ENCODE measurements at regions of chr5 and their contacts with region 1.

Region 1: GRCh38 chr5:147857302-147858129 is 21.0 kb upstream of the SCGB3A2 start:
- DNase-seq: peak; percentile 21
- H3K4me3 ChIP-seq: no peak overlapping the region
- H3K27ac ChIP-seq: no peak overlapping the region
- H3K4me1 ChIP-seq: no peaks in the 10 kb centered on the region; a peak in 1 of 4 replicates
- H3K27me3 ChIP-seq: no peaks in the 10 kb centered on the region
- CTCF ChIP-seq: peak; percentile 92
- EP300 ChIP-seq: no peak
- RAD21 ChIP-seq: peak; percentile 80

Region 2: DNA sequence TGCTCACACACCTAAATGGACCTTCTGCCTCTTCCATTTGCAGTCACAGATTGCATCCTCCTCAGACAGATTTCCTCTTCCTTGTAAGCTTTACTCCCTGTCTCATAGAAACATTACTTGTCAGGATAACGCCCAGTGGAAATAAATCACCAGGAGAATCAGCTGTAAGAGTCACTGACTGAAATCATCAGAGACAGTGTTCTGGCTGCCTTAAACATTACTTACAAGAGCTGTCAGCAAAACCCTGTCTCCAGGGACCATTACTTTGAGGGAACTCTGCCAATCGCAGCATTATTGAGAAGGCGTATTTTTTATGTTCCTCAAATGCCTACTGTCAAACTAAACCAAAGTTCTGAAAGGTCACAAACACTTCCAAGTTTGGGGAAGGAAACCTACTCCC is 353.5 kb before region 1 on chr5:
- CTCF ChIA-PET with region 1: no interaction called
- POLR2A ChIA-PET with region 1: no interaction called
- DNase-seq: no peak
- H3K4me3 ChIP-seq: 0 out of 4 replicates have a peak overlapping the region, but pooled peaks of 1 of the 2 experiments have one; percentile 7
- H3K27ac ChIP-seq: peak overlapping the region; percentile 69 to 89; a peak in 3 of 4 replicates
- H3K4me1 ChIP-seq: peaks cover 2 to 12% of the 10 kb centered on the region in 2 experiments; a peak in 2 of 4 replicates
- H3K27me3 ChIP-seq: no peaks in the 10 kb centered on the region
- CTCF ChIP-seq: no peak
- EP300 ChIP-seq: peak; percentile 65 to 88
- RAD21 ChIP-seq: no peak

Region 3: DNA sequence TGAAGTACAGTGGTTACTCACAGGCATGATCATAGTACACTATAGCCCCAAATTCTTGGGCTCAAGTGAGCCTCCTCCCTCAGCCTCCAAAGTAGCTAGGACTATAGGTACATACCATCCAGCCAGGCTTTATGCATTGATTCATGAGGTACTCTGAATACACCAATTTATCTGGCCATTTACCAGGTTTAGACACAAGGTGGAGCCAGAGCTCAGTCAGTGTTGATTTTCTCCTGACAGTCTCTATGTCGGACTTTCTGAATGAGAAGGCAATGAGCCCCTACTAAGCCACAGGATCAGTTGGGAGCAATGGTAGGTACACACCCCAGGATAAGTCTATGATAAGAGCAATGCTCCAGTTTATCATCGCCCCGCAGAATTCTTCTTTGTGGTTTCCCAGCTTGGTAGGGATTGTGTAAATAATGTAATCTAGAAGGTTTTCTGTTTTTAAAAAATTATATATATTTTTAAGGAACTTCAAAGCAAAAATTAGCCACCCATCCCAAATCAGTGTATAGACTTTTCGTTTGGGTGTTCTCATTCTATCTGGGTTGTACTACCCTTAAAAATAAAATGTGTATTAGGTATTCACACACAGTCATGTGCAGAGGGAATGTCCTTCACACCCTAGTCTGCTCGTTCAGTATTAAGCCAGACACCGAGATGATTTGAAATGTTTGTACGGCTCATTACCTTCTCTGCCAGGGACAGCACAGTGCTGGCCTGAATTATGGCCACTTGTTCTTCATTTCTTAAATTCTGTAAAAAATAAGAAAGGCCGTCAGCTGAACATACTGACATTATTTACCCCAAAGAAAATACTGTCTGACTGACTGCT is 229.2 kb before region 1 on chr5:
- CTCF ChIA-PET with region 1: interaction called, 10 read pairs
- POLR2A ChIA-PET with region 1: no interaction called
- DNase-seq: peak; percentile 58
- H3K4me3 ChIP-seq: no peak overlapping the region; a peak in 1 of 4 replicates
- H3K27ac ChIP-seq: no peak overlapping the region
- H3K4me1 ChIP-seq: peaks cover 0 to 15% of the 10 kb centered on the region in 2 experiments; a peak in 1 of 4 replicates
- H3K27me3 ChIP-seq: no peaks in the 10 kb centered on the region
- CTCF ChIP-seq: peak; percentile 85
- EP300 ChIP-seq: no peak
- RAD21 ChIP-seq: peak; percentile 97

Region 4: GRCh38 chr5:147658293-147658932 is 199.1 kb before region 1 on chr5:
- CTCF ChIA-PET with region 1: no interaction called
- POLR2A ChIA-PET with region 1: no interaction called
- DNase-seq: no peak
- H3K4me3 ChIP-seq: no peak overlapping the region
- H3K27ac ChIP-seq: no peak overlapping the region
- H3K4me1 ChIP-seq: no peaks in the 10 kb centered on the region
- H3K27me3 ChIP-seq: no peaks in the 10 kb centered on the region
- CTCF ChIP-seq: no peak
- EP300 ChIP-seq: no peak
- RAD21 ChIP-seq: no peak

Region 5: GRCh38 chr5:147699496-147700088 is 157.9 kb before region 1 on chr5:
- CTCF ChIA-PET with region 1: no interaction called
- POLR2A ChIA-PET with region 1: no interaction called
- DNase-seq: no peak
- H3K4me3 ChIP-seq: no peak overlapping the region
- H3K27ac ChIP-seq: no peak overlapping the region
- H3K4me1 ChIP-seq: peaks cover 0 to 1% of the 10 kb centered on the region in 2 experiments; a peak in 1 of 4 replicates
- H3K27me3 ChIP-seq: no peaks in the 10 kb centered on the region
- CTCF ChIP-seq: no peak
- EP300 ChIP-seq: no peak
- RAD21 ChIP-seq: no peak

Region 6: DNA sequence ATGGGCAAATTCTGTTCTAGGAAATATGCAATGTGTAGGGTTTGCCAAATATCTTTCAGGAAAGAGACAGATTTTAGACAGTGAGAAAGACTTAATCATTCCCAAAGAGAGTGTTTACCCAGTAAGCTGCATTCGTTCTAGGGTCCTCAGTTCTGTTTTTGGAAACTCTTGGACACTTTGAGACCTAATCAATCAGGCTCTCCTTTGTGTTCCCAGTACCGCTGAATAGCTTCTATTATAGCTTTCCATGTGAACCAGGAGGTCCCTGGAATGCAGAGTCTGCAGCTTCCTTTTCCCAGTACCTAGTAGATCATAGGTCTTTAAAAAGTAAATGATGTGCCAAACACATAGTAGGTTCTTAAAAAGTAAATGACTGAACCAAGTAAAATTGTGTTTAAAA is 14.6 kb before region 1 on chr5:
- CTCF ChIA-PET with region 1: interaction called, 23 read pairs
- POLR2A ChIA-PET with region 1: no interaction called
- DNase-seq: no peak
- H3K4me3 ChIP-seq: no peak overlapping the region
- H3K27ac ChIP-seq: no peak overlapping the region
- H3K4me1 ChIP-seq: no peaks in the 10 kb centered on the region
- H3K27me3 ChIP-seq: no peaks in the 10 kb centered on the region
- CTCF ChIP-seq: no peak
- EP300 ChIP-seq: no peak
- RAD21 ChIP-seq: no peak

Region 7: GRCh38 chr5:147878066-147878759 is 20.7 kb after region 1 on chr5 and contains the start of gene SCGB3A2:
- CTCF ChIA-PET with region 1: interaction called, 10 read pairs
- POLR2A ChIA-PET with region 1: no interaction called
- DNase-seq: no peak
- H3K4me3 ChIP-seq: no peak within 1 kb of the TSS
- H3K27ac ChIP-seq: no peak within 1 kb of the TSS
- H3K4me1 ChIP-seq: no peaks in the 10 kb centered on the region
- H3K27me3 ChIP-seq: no peaks in the 10 kb centered on the region
- CTCF ChIP-seq: no peak
- EP300 ChIP-seq: no peak
- RAD21 ChIP-seq: no peak
- polyA plus RNA-seq, gene SCGB3A2: not detected in 2 replicates

Region 8: DNA sequence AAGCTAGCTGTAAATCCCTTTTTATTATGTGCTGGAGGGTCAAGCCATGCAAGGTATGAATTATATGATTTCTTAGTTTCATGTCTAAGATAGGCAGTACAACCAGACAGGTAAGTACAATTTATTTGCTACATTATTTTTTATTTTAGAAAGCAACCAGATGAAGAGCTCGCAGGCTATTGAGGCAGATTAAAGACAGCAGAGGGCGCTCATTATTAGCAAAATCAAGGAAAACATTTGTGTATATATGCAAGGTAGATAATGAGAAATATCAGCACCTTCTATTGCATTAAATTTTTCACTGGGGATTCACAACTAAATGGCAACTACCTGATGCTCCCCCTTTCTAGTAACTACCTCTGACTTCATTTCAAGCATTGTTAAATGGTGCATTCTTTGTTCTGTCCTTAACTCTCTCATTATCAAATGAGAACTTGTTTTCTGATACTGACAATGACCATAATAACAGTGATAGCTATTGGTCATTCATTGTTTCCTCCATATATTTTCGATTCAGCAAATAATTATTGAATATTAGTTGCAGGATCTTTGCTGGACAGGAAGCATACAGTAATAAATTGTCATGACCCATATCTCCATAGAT is 29.6 kb after region 1 on chr5:
- CTCF ChIA-PET with region 1: interaction called, 11 read pairs
- POLR2A ChIA-PET with region 1: no interaction called
- DNase-seq: peak; percentile 3
- H3K4me3 ChIP-seq: no peak overlapping the region; a peak in 1 of 4 replicates
- H3K27ac ChIP-seq: no peak overlapping the region; a peak in 1 of 4 replicates
- H3K4me1 ChIP-seq: no peaks in the 10 kb centered on the region; a peak in 1 of 4 replicates
- H3K27me3 ChIP-seq: no peaks in the 10 kb centered on the region
- CTCF ChIP-seq: peak; percentile 87
- EP300 ChIP-seq: no peak
- RAD21 ChIP-seq: peak; percentile 69

Region 9: DNA sequence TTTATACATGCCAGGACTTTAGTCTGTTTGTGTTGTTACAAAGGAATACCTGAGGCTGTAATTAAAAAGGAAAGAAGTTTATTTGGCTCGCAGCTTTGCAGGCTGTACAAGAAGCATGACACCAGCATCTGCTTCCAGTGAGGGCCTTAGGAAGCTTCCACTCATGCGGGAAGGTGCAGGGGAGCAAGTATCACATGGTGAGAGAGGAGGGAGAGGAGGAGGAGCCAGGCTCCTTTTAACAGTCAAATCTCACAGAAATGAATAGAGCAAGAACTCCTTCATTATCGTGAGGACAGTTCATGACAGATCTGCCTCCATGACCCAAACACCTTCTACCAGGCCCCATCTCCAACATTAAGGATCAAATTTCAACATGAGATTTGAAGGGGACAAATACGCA is 67.5 kb after region 1 on chr5:
- CTCF ChIA-PET with region 1: interaction called, 12 read pairs
- POLR2A ChIA-PET with region 1: no interaction called
- DNase-seq: no peak
- H3K4me3 ChIP-seq: no peak overlapping the region
- H3K27ac ChIP-seq: no peak overlapping the region
- H3K4me1 ChIP-seq: peaks cover 0 to 5% of the 10 kb centered on the region in 2 experiments; a peak in 1 of 4 replicates
- H3K27me3 ChIP-seq: no peaks in the 10 kb centered on the region
- CTCF ChIP-seq: no peak
- EP300 ChIP-seq: no peak
- RAD21 ChIP-seq: no peak

Region 10: DNA sequence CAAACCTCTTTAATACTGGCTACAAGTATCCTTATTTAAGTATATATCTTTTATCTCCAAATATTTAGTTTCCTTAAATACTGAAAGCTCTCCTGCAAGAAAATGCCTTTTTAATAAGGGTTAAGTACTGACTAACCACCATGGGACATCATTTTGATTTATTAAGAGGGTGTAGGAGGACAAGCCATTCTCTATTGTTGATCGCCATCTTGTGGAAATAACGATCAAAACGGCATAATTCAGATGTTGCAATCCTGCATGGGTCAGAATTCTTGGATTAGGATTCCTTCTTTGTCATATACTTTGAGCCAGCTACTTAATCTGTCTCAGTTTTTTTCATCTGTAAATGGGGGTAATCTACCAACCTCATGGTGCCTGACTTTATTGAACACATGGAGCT is 77.5 kb after region 1 on chr5:
- CTCF ChIA-PET with region 1: interaction called, 34 read pairs
- POLR2A ChIA-PET with region 1: no interaction called
- DNase-seq: peak; percentile 53
- H3K4me3 ChIP-seq: no peak overlapping the region
- H3K27ac ChIP-seq: no peak overlapping the region
- H3K4me1 ChIP-seq: no peaks in the 10 kb centered on the region; a peak in 1 of 4 replicates
- H3K27me3 ChIP-seq: no peaks in the 10 kb centered on the region
- CTCF ChIP-seq: peak; percentile 77
- EP300 ChIP-seq: no peak
- RAD21 ChIP-seq: peak; percentile 82

Measured in SK-N-SH (cell line).